Mammary epithelial cell (primary cell): ENCODE measurements at regions of chr17 and their contacts with region 1.

Region 1: DNA sequence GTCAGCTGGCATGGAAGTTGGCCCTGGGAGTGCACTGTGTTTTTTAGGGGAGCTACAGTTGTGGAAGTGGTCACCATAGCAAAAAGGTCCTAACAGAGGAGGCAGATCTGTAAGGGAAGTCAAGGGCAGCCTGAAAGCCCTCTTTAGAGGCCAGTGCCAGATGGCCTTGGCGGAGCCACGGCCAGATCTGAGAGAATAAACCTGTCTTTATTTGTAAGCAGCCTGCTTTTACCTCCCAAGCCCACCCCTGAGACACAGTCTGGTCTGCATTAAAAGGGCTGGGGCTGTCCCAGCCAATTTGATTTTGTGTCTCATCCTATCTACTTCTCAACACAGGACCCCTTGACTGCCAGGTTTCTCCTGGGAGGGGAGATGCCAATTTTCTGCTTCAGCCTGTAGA is 51.0 kb upstream of the NOL11 start:
- DNase-seq: no peak
- H3K4me3 ChIP-seq: no peak overlapping the region
- H3K27ac ChIP-seq: no peak overlapping the region
- H3K4me1 ChIP-seq: no peaks in the 10 kb centered on the region
- H3K27me3 ChIP-seq: no peaks in the 10 kb centered on the region
- CTCF ChIP-seq: no peak

Region 2: GRCh38 chr17:67629971-67630320 is 36.8 kb before region 1 on chr17:
- CTCF ChIA-PET with region 1: no interaction called
- dilution Hi-C with region 1: loop called (anchors 5 kb)
- in situ Hi-C with region 1: no loop called
- intact Hi-C with region 1: no loop called
- DNase-seq: peak; percentile 38
- H3K4me3 ChIP-seq: no peak overlapping the region
- H3K27ac ChIP-seq: no peak overlapping the region
- H3K4me1 ChIP-seq: no peaks in the 10 kb centered on the region
- H3K27me3 ChIP-seq: no peaks in the 10 kb centered on the region
- CTCF ChIP-seq: peak; percentile 29 to 50